ENCODE measurements at regions of chr9 and their contacts with region 1.

Region 1: DNA sequence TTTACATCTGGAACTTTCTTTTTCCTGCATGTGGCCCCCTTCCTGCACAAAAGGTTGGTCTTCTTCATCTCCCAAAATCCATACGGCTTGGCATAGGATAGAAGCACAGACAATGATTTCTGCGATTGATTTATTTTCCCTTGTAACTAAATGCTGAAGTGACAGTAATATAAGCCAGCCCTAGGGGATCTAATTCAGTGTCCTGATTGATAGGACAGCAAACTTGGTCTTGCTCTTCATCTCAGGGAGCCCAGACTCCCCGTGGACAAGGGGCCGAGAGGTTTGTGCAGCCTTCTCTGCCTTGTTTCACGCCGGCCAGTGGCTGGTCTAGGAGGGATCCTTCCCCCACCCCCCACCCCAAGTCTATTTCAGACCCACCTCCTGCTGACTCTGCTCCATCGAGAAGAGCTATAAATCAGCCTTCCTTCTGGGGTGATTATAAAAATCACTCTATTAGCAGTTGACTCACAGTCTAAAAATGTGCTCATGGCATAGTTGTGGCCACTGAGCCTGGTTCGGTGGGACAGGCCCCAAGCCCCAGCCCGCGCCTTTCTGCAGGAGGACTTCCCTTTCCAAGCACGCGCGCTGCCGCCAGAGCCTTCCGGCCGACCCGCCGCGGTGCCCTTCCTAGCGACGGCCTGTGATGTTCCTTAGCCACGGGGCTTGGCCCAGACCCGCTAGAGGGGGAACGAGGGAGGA is 89.8 kb upstream of the COL5A1 start:
- DNase-seq: peak; percentile 91
- H3K4me3 ChIP-seq: no peak overlapping the region
- H3K27ac ChIP-seq: peak overlapping the region; percentile 68
- H3K27me3 ChIP-seq: no peaks in the 10 kb centered on the region
- CTCF ChIP-seq: peak; percentile 26

Region 2: GRCh38 chr9:134455934-134456739 is 95.7 kb before region 1 on chr9:
- in situ Hi-C with region 1: loop called (anchors 25 kb)
- DNase-seq: peak; percentile 95
- H3K4me3 ChIP-seq: peak overlapping the region; percentile 15
- H3K27ac ChIP-seq: peak overlapping the region; percentile 99
- H3K27me3 ChIP-seq: no peaks in the 10 kb centered on the region
- CTCF ChIP-seq: peak; percentile 29

Measured in brain microvascular endothelial cell (primary cell).